Activated CD4-positive, alpha-beta memory T cell treated with anti-CD3 and anti-CD28 coated beads for 36 hours (primary cell): ENCODE measurements at regions of chr3 and their contacts with region 1.

Region 1: GRCh38 chr3:122383771-122384697 is at the start of gene FAM162A:
- DNase-seq: peak; percentile 95
- H3K4me3 Mint-ChIP-seq: peak within 1 kb of the TSS; percentile 94
- H3K27ac Mint-ChIP-seq: peak within 1 kb of the TSS; percentile 92
- H3K4me1 Mint-ChIP-seq: peaks cover 60% of the 10 kb centered on the region
- H3K27me3 Mint-ChIP-seq: no peaks in the 10 kb centered on the region
- total RNA-seq, gene FAM162A: 99.1 to 102 TPM

Region 2: GRCh38 chr3:121863801-121864200 is 520.2 kb before region 1 on chr3:
- CTCF ChIA-PET with region 1: no interaction called
- POLR2A ChIA-PET with region 1: no interaction called
- intact Hi-C with region 1: no loop called
- DNase-seq: no peak
- H3K4me3 Mint-ChIP-seq: no peak overlapping the region
- H3K27ac Mint-ChIP-seq: no peak overlapping the region
- H3K4me1 Mint-ChIP-seq: no peaks in the 10 kb centered on the region
- H3K27me3 Mint-ChIP-seq: no peaks in the 10 kb centered on the region

Region 3: DNA sequence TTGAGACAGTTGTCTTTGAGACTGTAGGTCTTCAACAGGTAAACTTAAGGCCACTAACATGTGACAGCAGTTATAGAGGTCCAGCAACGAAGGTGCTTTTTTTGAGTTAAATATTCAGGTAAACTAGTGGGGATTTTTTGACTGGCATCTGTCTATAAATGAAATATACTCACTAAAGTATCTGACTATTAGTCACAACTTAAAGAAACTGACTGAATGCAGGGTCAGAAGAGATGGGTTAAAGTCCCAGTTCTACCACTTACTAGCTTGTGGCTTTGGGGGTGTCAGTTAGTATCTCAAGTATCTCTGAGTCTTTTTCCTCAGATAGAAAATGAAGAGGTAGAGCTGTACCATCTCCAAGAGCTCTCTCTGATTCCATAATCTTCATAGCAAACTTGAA is 19.0 kb before region 1 on chr3:
- CTCF ChIA-PET with region 1: interaction called, 6 read pairs
- POLR2A ChIA-PET with region 1: interaction called, 6 read pairs
- intact Hi-C with region 1: loop called (anchors 1 kb)
- DNase-seq: no peak
- H3K4me3 Mint-ChIP-seq: no peak overlapping the region
- H3K27ac Mint-ChIP-seq: peak overlapping the region; percentile 94
- H3K4me1 Mint-ChIP-seq: peaks cover 26% of the 10 kb centered on the region
- H3K27me3 Mint-ChIP-seq: no peaks in the 10 kb centered on the region

Region 4: GRCh38 chr3:122514123-122515019 is 130.3 kb after region 1 on chr3 and contains the start of gene KPNA1:
- CTCF ChIA-PET with region 1: interaction called, 3 read pairs
- POLR2A ChIA-PET with region 1: interaction called, 5 read pairs
- intact Hi-C with region 1: loop called (anchors 1 kb)
- DNase-seq: peak; percentile 91
- H3K4me3 Mint-ChIP-seq: peak within 1 kb of the TSS; percentile 77
- H3K27ac Mint-ChIP-seq: peak within 1 kb of the TSS; percentile 85
- H3K4me1 Mint-ChIP-seq: peaks cover 39% of the 10 kb centered on the region
- H3K27me3 Mint-ChIP-seq: no peaks in the 10 kb centered on the region
- total RNA-seq, gene KPNA1: 43.4 to 46.0 TPM

Region 5: GRCh38 chr3:122793568-122794416 is 409.8 kb after region 1 on chr3 and contains the start of gene HSPBAP1:
- CTCF ChIA-PET with region 1: no interaction called
- POLR2A ChIA-PET with region 1: interaction called, 3 read pairs
- intact Hi-C with region 1: loop called (anchors 5 kb)
- DNase-seq: peak; percentile 93
- H3K4me3 Mint-ChIP-seq: peak within 1 kb of the TSS; percentile 85
- H3K27ac Mint-ChIP-seq: peak within 1 kb of the TSS; percentile 82
- H3K4me1 Mint-ChIP-seq: peaks cover 29% of the 10 kb centered on the region
- H3K27me3 Mint-ChIP-seq: no peaks in the 10 kb centered on the region
- total RNA-seq, gene HSPBAP1: 4.8 TPM

Region 6: GRCh38 chr3:123138839-123139444 is 754.9 kb after region 1 on chr3:
- CTCF ChIA-PET with region 1: no interaction called
- POLR2A ChIA-PET with region 1: no interaction called
- intact Hi-C with region 1: no loop called
- DNase-seq: no peak
- H3K4me3 Mint-ChIP-seq: no peak overlapping the region
- H3K27ac Mint-ChIP-seq: no peak overlapping the region
- H3K4me1 Mint-ChIP-seq: no peaks in the 10 kb centered on the region
- H3K27me3 Mint-ChIP-seq: no peaks in the 10 kb centered on the region

Region 7: DNA sequence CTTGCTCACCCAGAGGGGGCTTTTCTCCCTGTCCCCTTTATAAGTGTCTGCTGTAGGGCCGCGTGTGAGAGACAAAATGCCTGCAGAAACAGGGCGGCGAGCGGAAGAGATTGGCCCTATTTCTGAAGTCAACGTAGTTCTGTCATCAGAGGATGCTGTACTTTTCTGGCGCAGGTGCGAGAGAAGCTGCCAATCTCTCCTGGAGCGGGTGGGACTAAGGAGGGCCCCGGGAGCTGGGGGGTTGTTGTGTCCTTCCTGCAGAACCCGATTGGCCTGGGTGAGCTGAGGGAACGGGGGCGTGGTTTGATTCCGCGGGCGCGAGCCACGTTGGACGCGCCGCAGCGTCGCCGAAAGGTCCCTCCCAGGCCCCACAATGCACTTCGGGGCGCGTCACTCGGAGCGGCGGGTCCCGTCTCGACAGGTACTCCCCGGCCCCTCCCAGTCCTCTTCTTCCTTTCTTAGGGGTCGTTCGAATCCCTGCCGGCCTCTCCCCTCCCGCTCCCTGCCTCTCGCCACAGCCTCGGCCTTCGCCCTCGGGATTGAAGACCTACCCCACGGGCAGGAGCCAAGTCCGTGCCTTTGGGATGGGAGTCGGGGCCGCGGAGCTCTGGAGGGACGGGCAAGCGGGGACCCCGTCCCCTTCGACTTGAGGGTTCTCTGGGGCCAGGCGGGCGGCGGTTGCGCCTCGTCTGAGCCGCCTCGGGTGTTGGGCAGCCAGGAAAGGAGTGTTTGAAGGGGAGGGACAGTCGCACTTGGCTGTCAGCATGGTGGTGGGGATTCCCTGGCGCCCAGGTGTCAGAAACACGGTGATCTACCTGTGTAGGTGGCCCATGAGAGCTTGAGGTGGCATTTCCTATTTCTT is 817.8 kb after region 1 on chr3 and contains the start of gene SEC22A:
- CTCF ChIA-PET with region 1: no interaction called
- POLR2A ChIA-PET with region 1: no interaction called
- intact Hi-C with region 1: loop called (anchors 5 kb)
- DNase-seq: peak; percentile 97
- H3K4me3 Mint-ChIP-seq: peak within 1 kb of the TSS; percentile 87
- H3K27ac Mint-ChIP-seq: peak within 1 kb of the TSS; percentile 86
- H3K4me1 Mint-ChIP-seq: peaks cover 23% of the 10 kb centered on the region
- H3K27me3 Mint-ChIP-seq: no peaks in the 10 kb centered on the region
- total RNA-seq, gene SEC22A: 19.6 to 21.5 TPM